Tibial artery (tissue), 4 donors: ENCODE measurements at regions of chr3 and their contacts with region 1.

Region 1: GRCh38 chr3:142226484-142226883 is 1.1 kb upstream of the GK5 start:
- DNase-seq: no peak
- H3K4me3 ChIP-seq: no peak overlapping the region
- H3K27ac ChIP-seq: no peak overlapping the region
- H3K4me1 ChIP-seq: peaks cover 0 to 31% (median 10%) of the 10 kb centered on the region in 4 donors
- H3K27me3 ChIP-seq: no peaks in the 10 kb centered on the region
- CTCF ChIP-seq: no peak

Region 2: DNA sequence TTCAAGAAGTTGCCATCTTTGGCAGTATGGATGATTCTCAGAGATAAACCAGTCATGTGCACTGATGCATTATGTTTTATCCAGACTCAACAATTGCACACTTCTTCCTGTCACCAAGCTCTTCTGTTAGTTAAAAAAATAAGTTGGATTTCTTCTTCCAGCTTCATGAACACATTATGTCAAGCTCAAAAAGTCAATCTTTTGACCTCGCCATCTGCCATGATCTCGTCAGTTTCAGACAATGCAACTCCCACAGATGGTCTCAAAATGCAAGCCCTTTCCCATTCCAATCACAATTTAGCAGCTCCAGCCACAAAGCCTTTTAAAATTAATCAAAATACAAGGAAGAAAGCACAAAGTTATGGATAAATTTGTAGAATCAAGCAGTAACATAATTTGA is 119.9 kb before region 1 on chr3:
- intact Hi-C with region 1: no loop called
- DNase-seq: no peak
- H3K4me3 ChIP-seq: no peak overlapping the region
- H3K27ac ChIP-seq: no peak overlapping the region
- H3K4me1 ChIP-seq: no peaks in the 10 kb centered on the region
- H3K27me3 ChIP-seq: no peaks in the 10 kb centered on the region
- CTCF ChIP-seq: no peak

Region 3: DNA sequence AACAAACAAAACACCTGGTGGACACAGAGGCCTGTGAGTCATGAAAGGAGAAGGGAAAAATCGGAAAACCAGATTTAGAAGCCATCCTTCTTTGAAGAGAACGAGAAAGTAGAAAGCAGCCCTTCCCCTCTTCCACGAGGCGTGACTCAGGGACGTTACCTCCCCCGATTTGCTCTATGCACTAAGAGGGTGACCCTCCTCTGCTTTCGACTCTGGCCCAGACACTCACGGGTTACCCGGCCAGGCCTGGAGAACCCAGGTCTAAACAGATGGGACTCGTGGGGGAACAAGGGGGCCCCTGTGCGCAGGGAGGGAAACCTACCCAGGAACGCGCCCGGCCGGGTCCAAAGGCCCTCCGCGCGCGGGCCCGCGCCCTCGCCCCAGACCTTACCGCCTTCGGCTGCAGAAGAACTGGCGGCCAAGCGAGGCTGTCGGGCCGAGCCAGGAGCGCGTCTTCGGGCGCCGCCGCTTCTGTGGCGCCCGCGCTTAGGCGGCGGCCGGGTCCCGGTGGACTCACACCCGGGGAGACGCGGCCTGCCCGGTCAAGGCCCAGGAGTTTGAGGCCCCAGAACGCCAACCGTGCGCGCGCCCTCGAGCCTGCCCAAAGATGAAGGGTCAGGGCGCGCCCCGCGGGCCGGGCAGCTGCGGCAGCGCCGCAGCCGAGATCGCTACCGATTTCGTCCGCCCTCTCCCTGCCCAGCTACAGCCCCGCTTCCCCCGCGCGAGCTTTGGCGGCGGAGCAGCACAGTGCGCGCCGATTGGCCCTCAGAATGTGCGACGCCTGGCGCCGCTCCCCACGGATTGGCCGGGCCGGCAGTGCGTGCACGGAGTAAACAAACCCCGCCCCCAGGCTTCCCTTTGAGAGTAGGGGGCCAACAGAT is 77.5 kb before region 1 on chr3 and contains the start of gene TFDP2:
- intact Hi-C with region 1: loop called (anchors 10 kb)
- DNase-seq: peak; percentile 92 to 95
- H3K4me3 ChIP-seq: peak within 1 kb of the TSS; percentile 81 to 84
- H3K27ac ChIP-seq: peak within 1 kb of the TSS; percentile 91 to 92
- H3K4me1 ChIP-seq: peaks cover 0 to 40% (median 14%) of the 10 kb centered on the region in 4 donors
- H3K27me3 ChIP-seq: no peaks in the 10 kb centered on the region
- CTCF ChIP-seq: no peak